Activated CD4-positive, alpha-beta memory T cell treated with anti-CD3 and anti-CD28 coated beads for 36 hours (primary cell): ENCODE measurements at regions of chr15 and their contacts with region 1.

Region 1: GRCh38 chr15:40493089-40493840 is 22.5 kb downstream of the CHST14 start:
- DNase-seq: peak; percentile 85
- H3K4me3 Mint-ChIP-seq: peak overlapping the region; percentile 4
- H3K27ac Mint-ChIP-seq: peak overlapping the region; percentile 74
- H3K4me1 Mint-ChIP-seq: peaks cover 27% of the 10 kb centered on the region
- H3K27me3 Mint-ChIP-seq: peaks cover 1% of the 10 kb centered on the region

Region 2: GRCh38 chr15:40320931-40321371 is 172.3 kb before region 1 on chr15:
- CTCF ChIA-PET with region 1: no interaction called
- POLR2A ChIA-PET with region 1: no interaction called
- intact Hi-C with region 1: no loop called
- DNase-seq: peak; percentile 66
- H3K4me3 Mint-ChIP-seq: no peak overlapping the region
- H3K27ac Mint-ChIP-seq: no peak overlapping the region
- H3K4me1 Mint-ChIP-seq: peaks cover 16% of the 10 kb centered on the region
- H3K27me3 Mint-ChIP-seq: peaks cover 3% of the 10 kb centered on the region

Region 3: GRCh38 chr15:40470423-40471104 is 22.7 kb before region 1 on chr15 and contains the start of gene CHST14:
- CTCF ChIA-PET with region 1: no interaction called
- POLR2A ChIA-PET with region 1: interaction called, 3 read pairs
- intact Hi-C with region 1: loop called (anchors 1 kb)
- DNase-seq: peak; percentile 62
- H3K4me3 Mint-ChIP-seq: peak within 1 kb of the TSS; percentile 84
- H3K27ac Mint-ChIP-seq: peak within 1 kb of the TSS; percentile 76
- H3K4me1 Mint-ChIP-seq: peaks cover 23% of the 10 kb centered on the region
- H3K27me3 Mint-ChIP-seq: no peaks in the 10 kb centered on the region
- total RNA-seq, gene CHST14: 8.2 to 8.7 TPM